Activated naive CD4-positive, alpha-beta T cell treated with anti-CD3 and anti-CD28 coated beads for 36 hours (primary cell): ENCODE measurements at regions of chr17 and their contacts with region 1.

Region 1: DNA sequence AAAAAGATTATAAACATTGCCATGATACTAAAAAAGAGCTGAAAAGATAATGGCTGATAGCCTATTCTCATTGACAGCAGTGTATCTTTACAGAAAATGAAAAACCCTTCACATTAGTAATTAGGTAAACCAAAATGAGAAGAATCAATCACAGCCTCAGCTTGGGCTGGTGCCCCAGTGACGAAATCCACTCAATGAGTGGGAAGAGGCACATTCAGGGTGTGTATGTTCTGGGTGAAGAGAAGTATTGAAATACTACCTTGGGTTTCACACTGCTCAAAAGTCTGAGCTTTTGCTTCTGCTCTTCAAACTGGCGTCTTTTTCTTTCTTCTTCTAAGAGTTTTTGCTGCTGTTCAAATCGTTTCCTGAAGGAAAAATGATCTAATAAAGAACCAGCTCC is 24.2 kb downstream of the SYNRG start:
- DNase-seq: no peak
- H3K4me3 Mint-ChIP-seq: no peak overlapping the region
- H3K27ac Mint-ChIP-seq: no peak overlapping the region
- H3K4me1 Mint-ChIP-seq: peaks cover 14% of the 10 kb centered on the region
- H3K27me3 Mint-ChIP-seq: no peaks in the 10 kb centered on the region

Region 2: GRCh38 chr17:37373530-37374159 is 211.4 kb before region 1 on chr17:
- CTCF ChIA-PET with region 1: no interaction called
- intact Hi-C with region 1: no loop called
- DNase-seq: peak; percentile 89
- H3K4me3 Mint-ChIP-seq: no peak overlapping the region
- H3K27ac Mint-ChIP-seq: no peak overlapping the region
- H3K4me1 Mint-ChIP-seq: peaks cover 7% of the 10 kb centered on the region
- H3K27me3 Mint-ChIP-seq: no peaks in the 10 kb centered on the region

Region 3: GRCh38 chr17:37551788-37552187 is 33.3 kb before region 1 on chr17:
- CTCF ChIA-PET with region 1: interaction called, 3 read pairs
- intact Hi-C with region 1: loop called (anchors 5 kb)
- DNase-seq: no peak
- H3K4me3 Mint-ChIP-seq: no peak overlapping the region
- H3K27ac Mint-ChIP-seq: no peak overlapping the region
- H3K4me1 Mint-ChIP-seq: peaks cover 65% of the 10 kb centered on the region
- H3K27me3 Mint-ChIP-seq: no peaks in the 10 kb centered on the region